Calu3 (cell line): ENCODE measurements at regions of chr7 and their contacts with region 1.

Region 1: DNA sequence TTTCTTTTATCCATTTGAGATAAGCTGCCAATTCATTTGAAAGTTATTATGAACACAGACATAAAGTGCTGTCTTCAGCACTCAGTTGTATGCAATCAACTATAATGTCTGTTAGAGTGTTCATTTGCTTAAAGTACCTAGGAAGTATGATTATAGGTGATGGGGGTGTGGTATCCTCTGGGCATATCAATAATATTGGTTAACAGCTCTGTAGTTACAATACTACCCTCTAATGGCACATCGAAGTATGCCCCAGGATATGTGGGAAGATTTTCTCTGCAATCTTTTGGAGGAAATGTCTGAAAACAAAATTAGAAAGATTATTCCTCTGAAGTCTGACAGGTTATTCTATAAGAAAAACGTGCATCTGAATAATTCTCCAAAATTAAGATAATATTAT is 429.7 kb downstream of the ARL4A start:
- DNase-seq: peak; percentile 20
- H3K4me3 Mint-ChIP-seq: no peak overlapping the region
- H3K27ac Mint-ChIP-seq: no peak overlapping the region
- H3K4me1 Mint-ChIP-seq: peaks cover 16% of the 10 kb centered on the region
- H3K27me3 Mint-ChIP-seq: no peaks in the 10 kb centered on the region
- CTCF ChIP-seq: peak; percentile 63

Region 2: DNA sequence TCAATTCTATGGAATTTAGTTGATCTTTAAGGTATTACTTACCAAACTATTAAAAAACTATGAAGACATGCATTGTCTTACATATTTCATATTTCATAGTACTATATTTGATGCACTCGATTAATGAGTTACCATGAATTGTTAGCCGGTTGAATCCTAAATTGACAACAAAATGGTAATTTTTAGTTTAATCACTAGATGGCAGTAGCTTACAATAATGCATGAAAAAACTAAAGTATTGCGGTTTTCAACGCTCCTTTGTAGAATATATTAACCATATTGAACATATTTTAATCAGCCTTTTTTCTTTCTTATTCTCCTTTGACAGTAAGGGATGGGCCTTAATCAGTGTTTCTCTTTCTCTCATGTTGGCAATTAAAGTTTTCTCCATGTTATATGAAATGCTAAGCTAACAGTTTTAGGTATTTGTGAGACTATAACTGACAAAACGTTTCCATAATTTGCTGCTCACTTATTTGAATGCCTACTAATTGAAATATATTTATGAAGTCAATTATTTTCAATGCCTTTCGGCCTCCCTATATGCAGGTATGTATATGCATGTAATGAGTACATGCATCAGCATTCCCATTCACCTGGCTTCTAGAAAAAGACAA is 478.1 kb before region 1 on chr7:
- CTCF ChIA-PET with region 1: no interaction called
- intact Hi-C with region 1: loop called (anchors 2 kb)
- DNase-seq: no peak
- H3K4me3 Mint-ChIP-seq: no peak overlapping the region
- H3K27ac Mint-ChIP-seq: no peak overlapping the region
- H3K4me1 Mint-ChIP-seq: peaks cover 8% of the 10 kb centered on the region
- H3K27me3 Mint-ChIP-seq: no peaks in the 10 kb centered on the region
- CTCF ChIP-seq: peak; percentile 74

Region 3: DNA sequence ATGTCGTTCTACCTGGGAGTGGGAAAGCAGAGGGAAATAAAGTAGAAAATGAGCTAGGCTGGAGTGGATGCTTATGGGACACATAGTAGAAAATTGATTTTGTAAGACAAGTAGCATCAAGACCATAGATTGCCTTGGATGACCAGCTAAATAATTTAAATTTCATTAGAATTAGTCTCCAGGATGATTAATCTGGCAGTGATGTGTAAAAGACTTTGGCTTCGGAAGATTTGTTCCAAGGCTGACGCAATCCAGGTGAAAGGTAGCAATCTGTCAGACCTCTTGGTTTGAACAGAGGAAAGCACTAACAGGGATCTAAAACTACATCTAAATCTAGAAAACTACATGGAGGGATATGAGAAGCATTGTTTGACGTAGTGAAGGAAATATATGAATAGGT is 193.1 kb before region 1 on chr7:
- CTCF ChIA-PET with region 1: no interaction called
- intact Hi-C with region 1: loop called (anchors 5 kb)
- DNase-seq: peak; percentile 32
- H3K4me3 Mint-ChIP-seq: peak overlapping the region; percentile 3
- H3K27ac Mint-ChIP-seq: peak overlapping the region; percentile 99
- H3K4me1 Mint-ChIP-seq: peaks cover 63% of the 10 kb centered on the region
- H3K27me3 Mint-ChIP-seq: no peaks in the 10 kb centered on the region
- CTCF ChIP-seq: no peak

Region 4: GRCh38 chr7:13042612-13043240 is 74.4 kb before region 1 on chr7:
- CTCF ChIA-PET with region 1: no interaction called
- intact Hi-C with region 1: loop called (anchors 5 kb)
- DNase-seq: no peak
- H3K4me3 Mint-ChIP-seq: no peak overlapping the region
- H3K27ac Mint-ChIP-seq: no peak overlapping the region
- H3K4me1 Mint-ChIP-seq: peaks cover 18% of the 10 kb centered on the region
- H3K27me3 Mint-ChIP-seq: no peaks in the 10 kb centered on the region
- CTCF ChIP-seq: no peak